Activated CD8-positive, alpha-beta T cell treated with anti-CD3 and anti-CD28 coated beads for 36 hours (primary cell): ENCODE measurements at regions of chr5 and their contacts with region 1.

Region 1: DNA sequence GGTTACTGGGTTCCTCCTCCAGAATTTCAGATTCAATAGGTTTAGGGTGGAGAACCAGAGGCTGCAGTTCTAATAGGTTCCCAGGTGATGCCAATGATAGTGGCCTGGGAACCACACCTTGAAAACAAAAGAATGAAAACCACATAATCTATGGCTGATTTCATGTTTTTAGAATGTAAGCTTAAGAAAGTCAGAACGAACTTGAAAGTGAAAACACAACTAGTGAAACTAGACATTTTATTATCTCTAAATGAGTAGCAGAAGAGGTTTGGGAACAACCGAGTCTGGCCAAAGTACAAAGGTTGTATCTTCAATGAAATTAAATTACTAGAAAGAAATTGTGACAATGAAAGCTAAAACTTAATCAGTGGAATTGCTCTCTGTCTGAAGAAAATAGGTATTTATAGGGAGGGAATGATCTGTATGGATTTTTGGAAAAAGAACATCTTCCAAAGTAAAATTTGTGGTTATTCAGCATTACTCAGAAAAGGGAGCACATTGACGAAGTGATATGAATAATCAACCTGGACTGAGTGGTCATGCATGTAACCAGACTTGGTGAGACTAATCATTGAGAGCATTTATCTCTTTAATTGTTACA is 24.9 kb upstream of the CEP120 start:
- DNase-seq: peak; percentile 33
- ATAC-seq: peak; percentile 86
- H3K4me3 Mint-ChIP-seq: no peak overlapping the region
- H3K27ac Mint-ChIP-seq: peak overlapping the region; percentile 6
- H3K4me1 Mint-ChIP-seq: peaks cover 28% of the 10 kb centered on the region
- H3K27me3 Mint-ChIP-seq: peaks cover 8% of the 10 kb centered on the region
- CTCF ChIP-seq: no peak

Region 2: DNA sequence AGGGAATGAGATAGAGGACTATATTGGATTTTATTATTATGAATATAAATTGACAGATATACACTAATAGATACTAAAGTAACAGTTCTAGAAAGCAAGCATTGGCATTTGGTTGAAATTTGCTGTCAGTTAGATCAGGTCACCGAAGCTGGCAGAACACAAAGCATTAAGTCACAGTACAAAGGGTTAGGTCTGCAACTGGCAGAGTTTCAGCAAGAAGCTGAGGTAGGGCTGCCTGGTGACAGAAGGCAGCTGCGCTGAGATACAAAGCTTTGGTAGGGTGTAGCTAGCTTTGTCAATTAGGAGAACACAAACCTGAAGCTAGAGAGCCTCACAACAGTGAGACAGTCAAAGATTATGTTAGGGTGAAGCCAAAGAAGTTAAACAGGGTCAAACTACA is 57.5 kb after region 1 on chr5:
- CTCF ChIA-PET with region 1: no interaction called
- POLR2A ChIA-PET with region 1: interaction called, 3 read pairs
- intact Hi-C with region 1: loop called (anchors 1 kb)
- DNase-seq: no peak
- ATAC-seq: no peak
- H3K4me3 Mint-ChIP-seq: no peak overlapping the region
- H3K27ac Mint-ChIP-seq: no peak overlapping the region
- H3K4me1 Mint-ChIP-seq: peaks cover 7% of the 10 kb centered on the region
- H3K27me3 Mint-ChIP-seq: peaks cover 11% of the 10 kb centered on the region
- CTCF ChIP-seq: no peak

Region 3: DNA sequence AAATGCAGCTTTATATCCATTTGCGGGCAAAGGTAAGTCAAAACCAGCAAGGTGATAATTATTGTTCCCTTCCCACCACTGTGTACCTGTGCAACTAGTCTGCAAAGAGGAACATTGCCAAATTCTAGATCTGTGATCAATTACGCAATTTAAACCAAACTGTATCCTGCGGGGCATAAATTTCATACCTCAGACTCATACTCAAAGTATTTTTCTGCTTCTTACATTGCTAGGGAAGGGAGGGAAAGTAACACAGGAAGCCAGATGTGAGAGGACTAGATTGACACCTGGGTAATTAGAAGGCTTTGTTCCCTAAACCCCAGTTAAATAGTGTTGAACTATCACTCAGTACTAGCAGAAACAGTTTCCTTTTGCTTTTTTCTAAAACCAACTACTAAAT is 1538.5 kb after region 1 on chr5:
- CTCF ChIA-PET with region 1: no interaction called
- POLR2A ChIA-PET with region 1: no interaction called
- intact Hi-C with region 1: no loop called
- DNase-seq: no peak
- ATAC-seq: no peak
- H3K4me3 Mint-ChIP-seq: no peak overlapping the region
- H3K27ac Mint-ChIP-seq: no peak overlapping the region
- H3K4me1 Mint-ChIP-seq: no peaks in the 10 kb centered on the region
- H3K27me3 Mint-ChIP-seq: no peaks in the 10 kb centered on the region
- CTCF ChIP-seq: no peak